ENCODE measurements at regions of chr6 and their contacts with region 1.

Region 1: GRCh38 chr6:28940858-28941680 is 17.3 kb upstream of the TRIM27 start:
- DNase-seq: peak; percentile 88
- ATAC-seq: peak; percentile 73
- H3K4me3 ChIP-seq: peak overlapping the region; percentile 74
- H3K27ac ChIP-seq: peak overlapping the region; percentile 18
- H3K4me1 ChIP-seq: no peaks in the 10 kb centered on the region
- H3K27me3 ChIP-seq: no peaks in the 10 kb centered on the region
- CTCF ChIP-seq: no peak
- POLR2A ChIP-seq: no peak
- RAD21 ChIP-seq: no peak

Region 2: DNA sequence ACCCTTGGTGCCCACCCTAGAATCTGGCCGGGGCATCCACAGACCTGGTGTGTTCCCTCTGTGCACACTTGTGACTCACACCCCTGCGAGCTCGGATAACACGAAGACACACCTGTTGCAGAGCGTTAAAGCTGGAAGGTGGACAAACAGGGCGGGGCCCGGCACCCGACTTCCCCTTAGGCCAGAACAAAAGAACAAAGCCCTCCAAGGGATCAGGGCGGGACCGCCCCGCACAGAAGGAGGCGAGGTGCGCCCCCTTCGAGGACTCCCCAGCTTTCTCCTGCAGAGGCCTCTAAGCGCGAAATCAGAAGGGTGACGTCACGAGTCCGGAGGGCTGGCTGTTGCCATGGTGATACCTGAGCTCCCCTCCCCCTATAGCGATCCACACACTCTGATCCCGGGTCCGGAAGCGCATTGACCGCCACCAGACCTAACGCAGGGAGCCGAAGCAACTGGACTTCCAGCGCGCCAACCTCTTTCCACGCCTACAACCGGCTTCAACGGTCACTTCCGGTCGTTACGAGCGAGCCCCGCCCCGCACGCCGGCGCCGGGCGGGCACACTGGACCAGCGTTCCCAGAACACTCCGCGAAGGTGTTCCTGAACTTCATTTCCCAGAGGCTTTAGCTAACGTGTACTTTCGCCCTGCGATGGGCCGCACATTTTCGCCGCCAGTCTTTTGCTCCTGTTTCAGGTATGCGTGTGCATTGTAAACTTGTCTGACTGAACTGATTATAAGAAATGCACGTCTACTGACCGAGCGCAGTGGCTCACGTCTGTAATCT is 1468.3 kb before region 1 on chr6 and contains the start of gene ZNF184:
- CTCF ChIA-PET with region 1: no interaction called
- POLR2A ChIA-PET with region 1: no interaction called
- dilution Hi-C with region 1: no loop called
- in situ Hi-C with region 1: no loop called
- intact Hi-C with region 1: loop called (anchors 10 kb)
- DNase-seq: peak; percentile 98
- ATAC-seq: peak; percentile 96
- H3K4me3 ChIP-seq: peak within 1 kb of the TSS; percentile 60
- H3K27ac ChIP-seq: peak within 1 kb of the TSS; percentile 74
- H3K4me1 ChIP-seq: no peaks in the 10 kb centered on the region
- H3K27me3 ChIP-seq: no peaks in the 10 kb centered on the region
- CTCF ChIP-seq: no peak; the same call in 1 of the 2 replicates
- POLR2A ChIP-seq: peak; percentile 82
- RAD21 ChIP-seq: no peak
- total RNA-seq, gene ZNF184: 8.1 and 10.6 TPM in 2 replicates

Region 3: DNA sequence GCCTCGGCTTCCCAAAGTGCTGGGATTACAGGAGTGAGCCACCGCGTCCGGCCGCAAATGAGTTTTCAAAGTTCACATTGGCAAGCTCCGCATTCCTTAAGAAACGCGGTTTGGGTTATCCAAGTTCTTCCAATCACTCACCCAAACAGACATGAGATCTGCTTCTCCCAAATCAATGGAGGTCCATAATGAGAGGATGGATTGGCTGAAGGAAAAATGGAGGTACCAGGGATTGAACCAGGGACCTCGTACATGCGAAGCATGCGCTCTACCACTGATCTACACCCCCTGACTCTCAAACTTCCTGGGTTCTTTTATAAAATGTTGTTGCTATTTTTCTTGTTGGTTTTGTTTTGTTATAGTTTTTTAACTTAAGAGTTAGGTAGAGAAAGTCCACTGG is 245.4 kb before region 1 on chr6:
- CTCF ChIA-PET with region 1: no interaction called
- POLR2A ChIA-PET with region 1: no interaction called
- dilution Hi-C with region 1: no loop called
- in situ Hi-C with region 1: no loop called
- intact Hi-C with region 1: no loop called
- DNase-seq: peak; percentile 41
- ATAC-seq: peak; percentile 81
- H3K4me3 ChIP-seq: no peak overlapping the region
- H3K27ac ChIP-seq: no peak overlapping the region
- H3K4me1 ChIP-seq: no peaks in the 10 kb centered on the region
- H3K27me3 ChIP-seq: peaks cover 28% of the 10 kb centered on the region
- CTCF ChIP-seq: no peak
- POLR2A ChIP-seq: no peak
- RAD21 ChIP-seq: no peak

Region 4: GRCh38 chr6:28807682-28808280 is 133.3 kb before region 1 on chr6:
- CTCF ChIA-PET with region 1: no interaction called
- POLR2A ChIA-PET with region 1: no interaction called
- dilution Hi-C with region 1: no loop called
- in situ Hi-C with region 1: no loop called
- intact Hi-C with region 1: loop called (anchors 5 kb)
- DNase-seq: peak; percentile 69
- ATAC-seq: peak; percentile 87
- H3K4me3 ChIP-seq: peak overlapping the region; percentile 42; the same call in 1 of the 2 replicates
- H3K27ac ChIP-seq: no peak overlapping the region
- H3K4me1 ChIP-seq: no peaks in the 10 kb centered on the region
- H3K27me3 ChIP-seq: peaks cover 18% of the 10 kb centered on the region
- CTCF ChIP-seq: no peak
- POLR2A ChIP-seq: no peak
- RAD21 ChIP-seq: no peak

Region 5: DNA sequence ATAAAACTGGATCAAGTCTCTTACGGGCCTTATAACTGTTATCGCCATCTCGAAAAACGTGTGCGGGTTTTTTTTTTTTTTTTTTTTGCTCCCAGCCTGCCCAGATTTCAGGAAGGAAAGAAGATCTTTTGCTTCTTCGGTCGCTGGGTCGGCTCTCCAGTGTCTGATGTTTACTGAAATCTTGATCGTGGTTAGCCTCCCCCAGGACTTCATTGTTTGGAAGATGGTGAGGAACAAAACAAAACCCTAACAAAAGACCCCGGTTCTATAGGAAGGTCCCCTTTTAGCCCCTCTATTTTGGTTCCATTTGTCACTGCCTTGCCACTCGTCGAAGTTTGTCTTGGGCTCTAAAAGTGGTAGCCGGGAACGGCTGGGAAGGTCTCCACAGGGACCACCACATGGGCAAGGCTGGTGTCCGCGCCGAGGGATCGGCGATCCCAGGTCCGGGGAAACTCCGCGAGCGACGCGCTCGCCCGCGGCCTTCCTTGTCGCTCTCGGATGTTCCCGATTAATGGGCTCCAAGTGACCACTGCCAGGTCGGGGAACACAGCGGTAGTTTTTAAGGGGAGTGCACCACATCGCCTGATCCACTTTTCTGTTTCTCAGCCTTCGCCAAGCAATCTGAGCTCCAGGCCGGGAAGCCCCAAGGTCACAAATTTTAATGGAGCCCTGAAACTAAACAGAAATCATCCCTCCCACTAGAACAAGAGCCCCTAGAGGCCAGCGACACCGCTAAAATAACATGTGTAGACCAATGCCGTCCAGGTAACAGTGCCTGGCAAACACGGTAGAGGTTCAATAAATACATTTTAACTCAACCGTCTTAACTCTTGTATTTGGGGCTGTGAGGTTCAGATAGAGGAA is 44.3 kb before region 1 on chr6:
- CTCF ChIA-PET with region 1: no interaction called
- POLR2A ChIA-PET with region 1: no interaction called
- dilution Hi-C with region 1: no loop called
- in situ Hi-C with region 1: no loop called
- intact Hi-C with region 1: loop called (anchors 1 kb)
- DNase-seq: peak; percentile 55
- ATAC-seq: peak; percentile 18
- H3K4me3 ChIP-seq: peak overlapping the region; percentile 81
- H3K27ac ChIP-seq: peak overlapping the region; percentile 75
- H3K4me1 ChIP-seq: no peaks in the 10 kb centered on the region
- H3K27me3 ChIP-seq: no peaks in the 10 kb centered on the region
- CTCF ChIP-seq: no peak
- POLR2A ChIP-seq: peak; percentile 13
- RAD21 ChIP-seq: no peak

Region 6: DNA sequence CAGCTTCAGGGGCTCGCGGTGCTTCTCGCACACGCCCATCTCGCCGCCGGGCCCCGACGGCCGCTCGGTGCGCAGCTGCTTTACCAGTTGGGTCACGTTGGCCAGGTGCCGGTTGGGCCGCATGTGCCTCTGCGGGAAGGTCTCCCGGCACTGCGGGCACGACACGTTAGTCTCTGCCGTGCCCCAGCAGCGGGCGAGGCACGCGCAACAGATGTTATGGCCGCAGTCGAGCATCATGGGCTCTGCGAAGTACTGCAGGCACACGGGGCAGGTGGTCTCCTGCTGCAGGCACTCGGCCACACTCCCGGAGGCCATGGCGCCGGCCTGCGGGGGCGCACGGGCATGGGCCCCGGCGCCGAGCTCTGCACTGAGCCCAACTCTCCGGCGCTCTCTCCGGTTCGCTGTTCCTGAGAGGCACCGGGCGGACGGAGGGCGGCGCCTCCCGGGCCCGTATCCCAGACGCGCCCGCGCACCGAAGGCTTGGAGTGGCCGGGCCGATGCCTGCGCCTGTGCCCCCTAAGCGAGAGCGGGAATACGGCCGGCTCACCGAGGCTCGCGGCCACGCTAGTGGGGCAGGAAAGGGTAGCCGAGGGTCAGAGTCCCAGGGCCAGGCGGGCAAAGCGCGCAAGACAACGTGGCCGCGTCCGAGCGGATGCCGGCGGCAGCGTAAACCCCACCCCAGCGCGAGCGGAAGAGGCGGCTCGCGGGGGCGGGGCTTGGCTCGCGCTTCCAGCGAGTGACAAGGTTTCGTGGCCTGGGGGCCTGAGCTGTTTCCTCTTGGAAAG is 17.6 kb before region 1 on chr6 and contains the start of gene TRIM27:
- CTCF ChIA-PET with region 1: no interaction called
- POLR2A ChIA-PET with region 1: no interaction called
- dilution Hi-C with region 1: no loop called
- in situ Hi-C with region 1: no loop called
- intact Hi-C with region 1: loop called (anchors 1 kb)
- DNase-seq: peak; percentile 75
- ATAC-seq: peak; percentile 91
- H3K4me3 ChIP-seq: peak within 1 kb of the TSS; percentile 92
- H3K27ac ChIP-seq: peak within 1 kb of the TSS; percentile 96
- H3K4me1 ChIP-seq: peaks cover 5% of the 10 kb centered on the region
- H3K27me3 ChIP-seq: no peaks in the 10 kb centered on the region
- CTCF ChIP-seq: no peak; the same call in 1 of the 2 replicates
- POLR2A ChIP-seq: peak; percentile 70
- RAD21 ChIP-seq: no peak
- total RNA-seq, gene TRIM27: 48.0 TPM in 2 replicates

Region 7: DNA sequence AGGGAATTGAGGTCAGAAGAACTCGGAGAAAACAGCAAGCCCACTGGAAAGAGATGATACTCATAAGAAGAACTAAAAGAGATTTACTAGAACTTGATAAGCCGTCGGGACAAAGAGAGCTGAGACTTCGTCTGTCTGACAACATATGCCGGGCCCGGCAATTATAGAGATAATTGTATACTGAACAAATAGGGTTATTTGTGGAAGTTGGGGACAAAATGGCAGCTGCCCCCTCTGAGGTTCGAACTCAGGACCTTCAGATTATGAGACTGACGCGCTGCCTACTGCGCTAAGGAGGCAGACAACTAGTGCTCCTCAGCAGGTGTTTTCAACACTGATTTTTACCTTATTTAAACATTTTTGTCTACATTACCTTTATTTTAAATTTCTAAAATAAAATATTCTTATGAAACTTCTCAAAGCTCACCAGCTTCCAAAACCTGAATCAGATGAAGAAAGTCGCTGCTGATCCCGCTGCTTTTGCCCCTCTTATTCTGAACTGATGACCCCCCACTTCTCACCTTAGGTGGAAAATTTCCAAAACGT is 12.0 kb after region 1 on chr6:
- CTCF ChIA-PET with region 1: no interaction called
- POLR2A ChIA-PET with region 1: no interaction called
- dilution Hi-C with region 1: no loop called
- in situ Hi-C with region 1: no loop called
- intact Hi-C with region 1: loop called (anchors 1 kb)
- DNase-seq: peak; percentile 72
- ATAC-seq: peak; percentile 90
- H3K4me3 ChIP-seq: peak overlapping the region; percentile 63
- H3K27ac ChIP-seq: no peak overlapping the region
- H3K4me1 ChIP-seq: no peaks in the 10 kb centered on the region; the same call in 1 of the 2 replicates
- H3K27me3 ChIP-seq: peaks cover 2% of the 10 kb centered on the region; the same call in 1 of the 2 replicates
- CTCF ChIP-seq: no peak
- POLR2A ChIP-seq: no peak
- RAD21 ChIP-seq: no peak

Region 8: GRCh38 chr6:29016559-29017427 is 75.7 kb after region 1 on chr6:
- CTCF ChIA-PET with region 1: no interaction called
- POLR2A ChIA-PET with region 1: no interaction called
- dilution Hi-C with region 1: no loop called
- in situ Hi-C with region 1: no loop called
- intact Hi-C with region 1: loop called (anchors 5 kb)
- DNase-seq: peak; percentile 76
- ATAC-seq: peak; percentile 97
- H3K4me3 ChIP-seq: peak overlapping the region; percentile 64
- H3K27ac ChIP-seq: no peak overlapping the region; the same call in 1 of the 2 replicates
- H3K4me1 ChIP-seq: no peaks in the 10 kb centered on the region
- H3K27me3 ChIP-seq: peaks cover 10% of the 10 kb centered on the region
- CTCF ChIP-seq: peak; percentile 78
- POLR2A ChIP-seq: no peak
- RAD21 ChIP-seq: peak; percentile 73